MCF 10A (cell line): ENCODE measurements at regions of chr12 and their contacts with region 1.

Region 1: DNA sequence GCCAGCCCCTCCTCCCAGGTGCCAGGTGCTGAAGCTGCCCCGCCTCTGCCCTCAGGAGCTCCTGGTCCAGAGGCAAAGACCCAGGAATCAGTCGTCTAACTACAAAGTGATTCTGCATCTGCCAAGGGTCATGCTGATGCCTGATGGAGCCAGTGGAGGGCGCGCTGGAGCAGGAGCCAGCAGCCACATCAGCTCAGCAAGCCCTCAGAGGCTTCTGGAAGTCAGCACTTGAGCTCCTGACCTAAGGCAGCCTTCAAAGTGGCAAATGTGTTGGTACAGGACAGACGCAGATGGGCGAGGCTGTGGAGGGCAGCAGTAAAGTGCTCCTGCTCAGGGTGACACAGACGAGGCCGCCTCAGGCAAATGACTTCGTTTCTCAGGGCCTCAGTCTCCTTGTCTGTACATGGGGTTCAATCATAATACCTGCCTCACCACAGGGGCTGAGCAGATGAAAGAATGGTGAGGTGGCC is 10.9 kb downstream of the C12orf43 start:
- DNase-seq: peak; percentile 53
- H3K4me3 Mint-ChIP-seq: no peak overlapping the region
- H3K27ac Mint-ChIP-seq: no peak overlapping the region
- H3K4me1 Mint-ChIP-seq: no peaks in the 10 kb centered on the region
- H3K27me3 Mint-ChIP-seq: no peaks in the 10 kb centered on the region
- CTCF ChIP-seq: peak; percentile 79

Region 2: GRCh38 chr12:121095544-121096198 is 90.3 kb after region 1 on chr12:
- CTCF ChIA-PET with region 1: interaction called, 7 read pairs
- POLR2A ChIA-PET with region 1: interaction called, 3 read pairs
- intact Hi-C with region 1: loop called (anchors 1 kb)
- DNase-seq: peak; percentile 57
- H3K4me3 Mint-ChIP-seq: peak overlapping the region; percentile 47
- H3K27ac Mint-ChIP-seq: no peak overlapping the region
- H3K4me1 Mint-ChIP-seq: peaks cover 9% of the 10 kb centered on the region
- H3K27me3 Mint-ChIP-seq: peaks cover 12% of the 10 kb centered on the region
- CTCF ChIP-seq: peak; percentile 90